ENCODE measurements at regions of chr7 and their contacts with region 1.

Region 1: GRCh38 chr7:786472-787255 is 45.6 kb upstream of the SUN1 start:
- DNase-seq: peak; percentile 77 to 83
- ATAC-seq: peak; percentile 52 to 90 (median 82)
- H3K4me3 ChIP-seq: no peak overlapping the region
- H3K27ac ChIP-seq: peak overlapping the region in 1 of 10 donors; percentile 8
- H3K4me1 ChIP-seq: peaks cover 0 to 7% (median 1%) of the 10 kb centered on the region in 9 donors
- H3K27me3 ChIP-seq: no peaks in the 10 kb centered on the region
- CTCF ChIP-seq: peak; percentile 68 to 83 (median 78)

Region 2: GRCh38 chr7:831596-832166 is 45.0 kb after region 1 on chr7:
- intact Hi-C with region 1: loop called in 4 of 10 experiments (anchors 2 to 10 kb)
- DNase-seq: no peak
- ATAC-seq: peak; percentile 46 to 89 (median 80)
- H3K4me3 ChIP-seq: peak overlapping the region in 9 of 10 donors; percentile 0 to 36 (median 31)
- H3K27ac ChIP-seq: peak overlapping the region; percentile 78 to 97 (median 92)
- H3K4me1 ChIP-seq: peaks cover 43 to 100% (median 76%) of the 10 kb centered on the region in 9 donors
- H3K27me3 ChIP-seq: no peaks in the 10 kb centered on the region
- CTCF ChIP-seq: no peak

Region 3: GRCh38 chr7:836411-837400 is 50.0 kb after region 1 on chr7:
- intact Hi-C with region 1: loop called in 4 of 10 experiments (anchors 2 to 10 kb)
- DNase-seq: no peak
- ATAC-seq: peak; percentile 18 to 68 (median 48)
- H3K4me3 ChIP-seq: no peak overlapping the region
- H3K27ac ChIP-seq: peak overlapping the region; percentile 25 to 97 (median 74)
- H3K4me1 ChIP-seq: peaks cover 24 to 79% (median 56%) of the 10 kb centered on the region in 9 donors
- H3K27me3 ChIP-seq: no peaks in the 10 kb centered on the region
- CTCF ChIP-seq: peak; percentile 28 to 65 (median 55)

Region 4: DNA sequence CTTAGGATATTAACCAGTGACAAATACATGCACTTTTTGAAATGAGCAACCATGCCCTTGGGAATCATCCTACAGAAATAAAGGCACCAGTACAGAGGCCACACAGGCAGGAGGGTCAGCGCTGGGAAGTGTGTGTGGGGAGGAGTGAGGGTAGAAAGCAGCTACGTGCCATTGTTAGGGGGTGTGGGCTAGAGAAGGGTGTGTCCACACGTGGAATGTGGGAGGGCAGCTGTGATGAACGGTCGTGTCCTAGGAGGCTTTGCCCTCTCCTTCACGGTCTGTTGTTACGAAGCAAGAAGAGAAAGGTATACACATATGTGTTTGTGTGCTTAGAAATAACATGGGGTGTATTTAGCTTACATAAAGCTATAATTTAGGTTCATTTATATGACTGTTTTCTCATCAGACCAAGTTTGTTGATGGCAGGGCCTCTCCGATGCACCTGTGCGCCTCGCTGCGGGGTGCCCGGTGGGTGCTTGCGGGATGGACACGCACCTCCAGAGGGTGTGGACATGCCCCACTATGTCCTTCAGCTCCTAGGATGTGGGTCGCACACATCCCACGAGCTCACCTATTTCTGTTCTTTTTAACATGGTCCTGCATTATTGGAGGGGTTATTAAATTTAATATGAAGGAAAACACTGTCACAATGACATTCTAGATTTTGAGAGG is 72.8 kb after region 1 on chr7:
- intact Hi-C with region 1: loop called in 1 of 10 experiments (anchors 10 kb)
- DNase-seq: no peak
- ATAC-seq: peak in 1 of 8 donors; percentile 22
- H3K4me3 ChIP-seq: no peak overlapping the region
- H3K27ac ChIP-seq: no peak overlapping the region
- H3K4me1 ChIP-seq: no peaks in the 10 kb centered on the region
- H3K27me3 ChIP-seq: no peaks in the 10 kb centered on the region
- CTCF ChIP-seq: no peak

Region 5: DNA sequence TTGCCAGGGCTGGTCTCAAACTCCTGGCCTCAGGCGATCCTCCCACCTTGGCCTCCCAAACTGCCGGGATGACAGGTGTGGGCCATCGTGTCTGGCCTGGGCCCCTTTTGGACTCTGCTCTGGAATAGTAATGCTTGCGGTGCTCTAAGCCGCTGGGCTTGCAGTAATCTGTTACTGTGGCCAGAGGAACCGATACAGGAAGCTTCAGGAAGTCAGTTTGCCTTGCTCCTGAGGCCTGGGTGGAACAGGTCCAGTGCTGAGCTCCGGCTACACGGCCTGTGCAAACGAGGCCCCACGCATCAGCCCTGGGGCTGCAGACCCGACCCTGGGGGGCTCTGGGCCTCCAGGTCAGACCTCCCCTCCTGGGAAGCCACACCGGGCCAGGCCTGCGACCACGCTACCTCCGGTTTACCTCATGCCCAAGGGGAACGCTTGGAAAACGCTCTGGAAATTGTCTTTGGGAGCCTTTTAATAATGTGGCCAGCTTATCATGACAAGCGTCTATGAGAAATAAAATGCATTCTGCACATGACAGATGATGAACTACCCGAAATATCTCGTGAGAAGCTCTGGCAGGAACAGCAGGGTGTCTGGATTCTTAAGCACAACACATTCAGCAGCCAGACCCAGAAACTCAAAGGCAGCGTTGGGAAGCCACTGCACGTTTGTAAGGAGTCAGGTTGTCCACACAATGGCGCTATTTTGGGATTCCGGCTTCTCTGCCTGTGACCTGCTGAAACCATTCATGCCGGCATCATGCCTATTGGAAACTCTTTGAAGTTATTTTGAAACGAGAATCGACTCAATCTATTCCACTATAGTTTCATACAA is 178.0 kb after region 1 on chr7:
- intact Hi-C with region 1: loop called in 1 of 10 experiments (anchors 10 kb)
- DNase-seq: peak; percentile 23 to 66
- ATAC-seq: peak; percentile 48 to 75 (median 64)
- H3K4me3 ChIP-seq: peak overlapping the region in 2 of 10 donors; percentile 2 to 9
- H3K27ac ChIP-seq: peak overlapping the region; percentile 64 to 91 (median 82)
- H3K4me1 ChIP-seq: peaks cover 21 to 62% (median 44%) of the 10 kb centered on the region in 9 donors
- H3K27me3 ChIP-seq: peaks cover 0 to 4% (median 0%) of the 10 kb centered on the region in 7 donors
- CTCF ChIP-seq: peak in 6 of 9 donors; percentile 22 to 49 (median 30)

Measured in heart right ventricle (tissue), 16 donors.